GM23248 (cell line): ENCODE measurements at regions of chr18 and their contacts with region 1.

Region 1: DNA sequence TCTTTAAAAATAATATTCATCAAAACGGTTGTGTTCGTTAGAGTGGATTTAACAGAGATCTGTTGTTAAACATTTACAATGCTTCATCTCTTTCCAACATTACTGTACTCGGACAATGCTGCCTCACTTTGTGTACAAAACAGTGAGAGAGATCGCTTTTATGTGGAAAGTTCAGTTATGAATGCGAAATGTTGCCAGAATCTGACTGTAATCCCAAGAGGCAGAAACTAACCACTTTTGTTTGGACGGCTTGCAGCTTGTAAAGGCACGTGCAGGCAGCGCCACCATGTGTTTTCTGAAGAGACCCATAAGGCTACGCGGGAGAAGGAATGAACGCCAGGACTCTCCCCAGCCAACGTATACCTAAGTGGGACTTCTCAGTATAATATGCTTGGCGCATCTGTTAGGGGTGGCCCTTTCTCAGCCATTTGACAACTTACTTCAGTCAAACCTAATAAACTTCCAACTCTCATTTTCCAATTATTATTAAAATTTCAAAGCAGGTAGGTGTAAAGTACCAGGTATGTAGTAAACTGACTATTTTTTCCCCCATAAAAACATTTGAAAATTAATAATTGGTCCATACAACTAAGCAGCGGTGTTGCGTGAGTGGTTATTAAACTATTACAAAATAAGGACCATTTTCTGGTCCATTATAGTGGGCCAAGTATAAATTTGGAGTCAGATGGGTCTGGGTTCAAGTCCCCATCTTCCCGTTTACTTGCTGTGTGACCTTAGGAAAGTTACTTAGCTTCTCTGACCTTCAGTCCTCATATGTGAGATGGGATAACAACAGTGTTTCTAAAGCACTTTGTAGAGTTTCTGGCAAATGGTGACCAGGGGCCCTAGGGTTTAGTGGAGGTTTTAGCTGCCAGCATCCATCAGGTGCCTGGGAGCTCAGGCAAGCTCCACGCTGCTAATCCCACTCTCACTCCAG is 5.6 kb upstream of the NAPG start:
- DNase-seq: peak; percentile 98
- H3K4me3 ChIP-seq: peak overlapping the region; percentile 35
- H3K27ac ChIP-seq: peak overlapping the region; percentile 53
- H3K4me1 ChIP-seq: peaks cover 21% of the 10 kb centered on the region
- H3K27me3 ChIP-seq: no peaks in the 10 kb centered on the region

Region 2: DNA sequence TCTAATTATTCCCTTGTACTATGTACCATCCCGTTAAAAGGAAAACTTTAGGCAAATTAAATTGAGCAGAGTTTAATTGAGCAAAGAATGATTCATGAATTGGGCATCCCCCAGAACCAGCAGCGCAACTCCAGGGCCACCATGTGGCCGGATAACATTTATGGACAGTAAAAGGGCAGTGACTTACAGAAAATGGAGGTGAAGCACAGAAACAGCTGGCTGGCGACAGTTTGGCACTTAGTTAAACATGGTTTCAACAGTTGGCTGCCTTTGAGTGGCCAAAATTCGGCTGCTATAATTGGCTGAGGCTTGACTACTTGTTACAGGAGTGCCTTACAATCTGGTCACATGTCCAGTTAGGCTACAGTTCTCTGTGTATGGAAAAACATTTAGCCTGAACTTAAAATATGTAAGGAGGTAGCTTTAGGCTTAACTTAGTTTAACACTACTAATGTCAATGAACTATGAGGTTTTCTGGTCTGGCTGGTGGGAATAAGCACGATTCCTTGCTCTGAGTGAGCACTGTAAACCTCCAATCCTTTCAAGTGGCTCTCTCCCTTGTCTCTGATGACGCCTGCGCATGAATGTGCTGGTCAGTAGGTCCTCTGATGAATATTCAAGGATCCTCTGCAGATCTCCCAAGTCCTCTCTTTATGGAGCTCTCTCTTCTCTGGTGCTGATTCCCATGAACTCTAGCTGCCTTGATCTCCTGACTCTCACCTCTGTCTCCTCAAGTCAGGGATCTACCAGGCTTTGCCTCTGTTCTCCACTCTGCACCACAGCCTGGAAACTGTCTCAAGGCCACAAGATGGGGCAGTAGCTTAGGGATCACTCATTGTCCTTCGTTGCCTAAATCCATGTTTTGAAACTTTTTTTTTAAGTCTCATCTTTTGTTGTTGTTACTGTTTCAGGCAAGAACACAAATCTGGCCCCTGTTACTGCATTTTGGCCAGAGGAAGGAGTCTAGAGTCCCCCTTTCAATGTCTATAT is 836.6 kb before region 1 on chr18:
- in situ Hi-C with region 1: loop called (anchors 25 kb)
- DNase-seq: peak; percentile 89
- H3K4me3 ChIP-seq: peak overlapping the region; percentile 57
- H3K27ac ChIP-seq: peak overlapping the region; percentile 91
- H3K4me1 ChIP-seq: peaks cover 25% of the 10 kb centered on the region
- H3K27me3 ChIP-seq: no peaks in the 10 kb centered on the region

Region 3: DNA sequence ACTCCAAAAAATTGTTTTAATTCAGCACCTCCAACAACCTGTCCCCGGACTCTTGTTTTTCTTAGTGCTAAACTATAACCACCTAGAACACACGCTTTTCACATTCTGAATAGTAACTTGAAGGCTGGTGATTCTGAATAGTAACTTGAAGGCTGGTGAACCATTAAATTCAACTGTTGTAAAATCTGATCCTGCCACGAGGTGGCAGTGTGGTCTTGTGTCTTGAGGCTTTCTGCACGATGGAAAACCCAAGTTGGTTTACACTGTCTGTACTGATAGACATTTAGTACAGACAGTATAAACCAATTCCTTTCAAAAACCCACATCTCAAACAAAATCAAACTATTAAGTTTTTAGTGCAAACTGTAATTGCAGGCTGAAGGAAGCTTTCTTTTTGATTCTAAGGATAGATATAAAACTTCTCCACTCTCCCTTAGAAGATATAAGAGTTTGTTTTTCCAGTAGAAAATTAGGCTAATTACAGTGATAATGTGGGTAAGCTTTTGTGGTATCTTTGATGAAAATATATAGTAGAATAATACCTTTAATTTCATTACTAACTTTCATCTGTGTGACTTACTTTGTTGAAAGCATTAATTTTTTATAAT is 548.9 kb before region 1 on chr18:
- in situ Hi-C with region 1: loop called (anchors 5 kb)
- DNase-seq: peak; percentile 75
- H3K4me3 ChIP-seq: no peak overlapping the region
- H3K27ac ChIP-seq: no peak overlapping the region
- H3K4me1 ChIP-seq: no peaks in the 10 kb centered on the region
- H3K27me3 ChIP-seq: no peaks in the 10 kb centered on the region

Region 4: GRCh38 chr18:10015941-10016819 is 504.1 kb before region 1 on chr18:
- in situ Hi-C with region 1: loop called (anchors 10 kb)
- DNase-seq: peak; percentile 95
- H3K4me3 ChIP-seq: 0 out of 2 replicates have a peak overlapping the region, but pooled peaks have one; percentile 31
- H3K27ac ChIP-seq: peak overlapping the region; percentile 80
- H3K4me1 ChIP-seq: peaks cover 30% of the 10 kb centered on the region
- H3K27me3 ChIP-seq: no peaks in the 10 kb centered on the region

Region 5: GRCh38 chr18:11136241-11136640 is 616.0 kb after region 1 on chr18:
- in situ Hi-C with region 1: no loop called
- DNase-seq: no peak
- H3K4me3 ChIP-seq: no peak overlapping the region
- H3K27ac ChIP-seq: no peak overlapping the region
- H3K4me1 ChIP-seq: no peaks in the 10 kb centered on the region
- H3K27me3 ChIP-seq: no peaks in the 10 kb centered on the region; the same call in none of the 2 replicates